ENCODE measurements at regions of chr10 and their contacts with region 1.

Region 1: DNA sequence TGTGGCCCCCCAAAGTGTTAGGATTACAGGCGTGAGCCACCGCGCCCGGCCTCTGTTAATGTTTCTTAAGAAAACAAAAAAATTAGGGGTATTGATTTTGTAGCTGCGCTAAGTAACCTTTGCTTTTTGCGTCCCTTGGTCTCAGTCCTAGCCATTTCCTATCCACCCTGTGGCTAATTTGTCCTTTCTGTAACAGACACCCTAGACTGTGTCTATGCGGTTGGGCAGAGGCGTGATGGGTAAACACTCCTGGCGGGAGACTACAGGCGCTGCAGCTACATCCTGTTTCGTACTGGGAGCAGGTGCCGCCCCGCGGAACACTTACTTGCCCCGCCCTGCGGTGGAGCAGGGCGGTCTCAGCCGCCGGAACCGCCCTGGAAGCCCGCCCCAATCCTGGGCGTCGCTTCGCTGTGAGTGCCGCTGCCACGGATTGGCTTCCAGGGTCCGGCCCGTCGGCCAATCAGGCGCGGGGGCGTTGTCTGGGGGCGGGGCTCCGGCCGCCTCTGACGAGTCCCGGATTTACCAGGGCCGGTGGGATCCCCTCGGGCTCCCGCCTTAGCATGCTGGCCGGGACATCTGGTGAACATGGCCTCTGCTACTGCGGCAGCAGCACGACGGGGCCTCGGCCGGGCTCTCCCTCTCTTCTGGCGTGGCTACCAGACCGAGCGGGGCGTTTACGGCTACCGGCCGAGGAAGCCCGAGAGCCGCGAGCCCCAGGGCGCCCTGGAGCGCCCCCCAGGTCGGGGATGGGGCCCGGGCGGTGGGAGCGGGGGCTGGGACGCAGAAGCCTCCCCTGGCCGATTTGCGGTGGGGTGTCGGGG is at the start of gene DHTKD1:
- DNase-seq: peak; percentile 99
- H3K4me3 ChIP-seq: peak within 1 kb of the TSS; percentile 82 to 92 (median 87)
- H3K27ac ChIP-seq: peak within 1 kb of the TSS; percentile 53
- H3K4me1 ChIP-seq: peaks cover 8% of the 10 kb centered on the region
- H3K27me3 ChIP-seq: peaks cover 0 to 6% of the 10 kb centered on the region in 2 experiments
- CTCF ChIP-seq: peak; percentile 7 to 44
- POLR2A ChIP-seq: peak; percentile 65
- total RNA-seq, gene DHTKD1: 15.3 and 17.6 TPM in 2 replicates

Region 2: GRCh38 chr10:11975795-11976194 is 92.9 kb before region 1 on chr10:
- CTCF ChIA-PET with region 1: no interaction called
- POLR2A ChIA-PET with region 1: no interaction called
- dilution Hi-C with region 1: no loop called
- intact Hi-C with region 1: no loop called
- DNase-seq: no peak
- H3K4me3 ChIP-seq: no peak overlapping the region
- H3K27ac ChIP-seq: no peak overlapping the region
- H3K4me1 ChIP-seq: no peaks in the 10 kb centered on the region
- H3K27me3 ChIP-seq: no peaks in the 10 kb centered on the region
- CTCF ChIP-seq: no peak
- POLR2A ChIP-seq: no peak

Region 3: GRCh38 chr10:12129222-12130111 is 60.8 kb after region 1 on chr10 and contains the start of gene SEC61A2:
- CTCF ChIA-PET with region 1: no interaction called
- POLR2A ChIA-PET with region 1: no interaction called
- dilution Hi-C with region 1: no loop called
- intact Hi-C with region 1: loop called (anchors 1 kb)
- DNase-seq: peak; percentile 91
- H3K4me3 ChIP-seq: peak within 1 kb of the TSS; percentile 74 to 79 (median 78)
- H3K27ac ChIP-seq: peak within 1 kb of the TSS; percentile 67
- H3K4me1 ChIP-seq: peaks cover 2% of the 10 kb centered on the region
- H3K27me3 ChIP-seq: no peaks in the 10 kb centered on the region
- CTCF ChIP-seq: no peak
- POLR2A ChIP-seq: peak; percentile 76
- total RNA-seq, gene SEC61A2: 7.3 and 9.5 TPM in 2 replicates

Region 4: GRCh38 chr10:12140038-12140437 is 71.4 kb after region 1 on chr10:
- CTCF ChIA-PET with region 1: no interaction called
- POLR2A ChIA-PET with region 1: no interaction called
- dilution Hi-C with region 1: no loop called
- intact Hi-C with region 1: no loop called
- DNase-seq: no peak
- H3K4me3 ChIP-seq: no peak overlapping the region
- H3K27ac ChIP-seq: no peak overlapping the region
- H3K4me1 ChIP-seq: no peaks in the 10 kb centered on the region
- H3K27me3 ChIP-seq: no peaks in the 10 kb centered on the region
- CTCF ChIP-seq: no peak
- POLR2A ChIP-seq: no peak